SK-N-SH (cell line): ENCODE measurements at regions of chr4 and their contacts with region 1.

Region 1: GRCh38 chr4:140903522-140904475 is 147.6 kb upstream of the TBC1D9 start:
- DNase-seq: peak; percentile 44
- H3K4me3 ChIP-seq: no peak overlapping the region
- H3K27ac ChIP-seq: peak overlapping the region in 1 of 2 experiments; percentile 99; a peak in 3 of 4 replicates
- H3K4me1 ChIP-seq: peaks cover 20 to 69% of the 10 kb centered on the region in 2 experiments; a peak in 3 of 4 replicates
- H3K27me3 ChIP-seq: no peaks in the 10 kb centered on the region
- CTCF ChIP-seq: no peak
- EP300 ChIP-seq: peak in 1 of 2 experiments; percentile 84; a peak in 3 of 4 replicates
- RAD21 ChIP-seq: peak; percentile 51

Region 2: DNA sequence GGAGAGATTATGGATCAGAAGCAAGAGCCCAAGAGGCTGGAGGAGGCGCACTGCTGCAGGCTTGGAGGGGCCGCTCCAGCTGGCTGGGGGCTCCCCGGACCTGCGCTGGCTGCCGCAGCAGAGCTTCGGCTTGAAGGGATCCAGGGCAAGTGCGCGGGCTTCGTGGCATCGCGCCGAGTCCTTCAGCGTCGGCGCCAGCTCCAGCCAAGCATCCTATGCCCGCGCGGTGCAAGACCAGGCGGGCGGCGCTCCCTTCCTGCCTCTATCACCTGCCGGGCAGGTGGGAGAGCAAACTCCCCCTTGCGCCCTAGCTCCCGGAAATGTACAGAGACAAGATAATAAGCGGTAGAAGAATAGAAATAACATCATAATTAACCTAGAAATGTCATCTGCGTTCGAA is 324.5 kb before region 1 on chr4:
- CTCF ChIA-PET with region 1: no interaction called
- POLR2A ChIA-PET with region 1: no interaction called
- DNase-seq: peak; percentile 70
- H3K4me3 ChIP-seq: peak overlapping the region in 1 of 2 experiments; percentile 19; a peak in 1 of 4 replicates
- H3K27ac ChIP-seq: no peak overlapping the region
- H3K4me1 ChIP-seq: peaks cover 0 to 4% of the 10 kb centered on the region in 2 experiments; a peak in 1 of 4 replicates
- H3K27me3 ChIP-seq: peaks cover 34% of the 10 kb centered on the region; the same call in 1 of the 2 replicates
- CTCF ChIP-seq: no peak
- EP300 ChIP-seq: no peak
- RAD21 ChIP-seq: no peak

Region 3: DNA sequence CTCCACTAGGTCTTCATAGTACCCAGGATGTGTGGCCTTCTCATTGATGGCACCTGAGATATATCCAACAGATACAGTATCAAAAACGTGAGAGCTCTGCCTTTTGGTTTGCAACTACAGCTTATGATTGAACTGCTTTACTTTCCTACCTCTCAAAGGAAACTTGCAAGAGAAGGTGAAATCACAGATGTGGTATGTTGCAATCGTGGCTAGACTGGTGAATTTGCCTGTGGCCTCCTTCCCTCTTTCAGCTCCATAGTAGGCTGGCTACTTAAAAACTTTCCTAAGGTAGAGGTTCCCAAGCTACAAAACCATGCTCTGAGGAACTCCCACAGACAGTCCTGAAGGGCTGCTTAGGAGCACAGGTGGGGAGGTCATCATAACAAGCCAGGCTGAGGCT is 241.7 kb before region 1 on chr4:
- CTCF ChIA-PET with region 1: no interaction called
- POLR2A ChIA-PET with region 1: no interaction called
- DNase-seq: no peak
- H3K4me3 ChIP-seq: no peak overlapping the region
- H3K27ac ChIP-seq: no peak overlapping the region
- H3K4me1 ChIP-seq: no peaks in the 10 kb centered on the region
- H3K27me3 ChIP-seq: no peaks in the 10 kb centered on the region
- CTCF ChIP-seq: no peak
- EP300 ChIP-seq: no peak
- RAD21 ChIP-seq: no peak

Region 4: GRCh38 chr4:140807491-140808252 is 96.1 kb before region 1 on chr4:
- CTCF ChIA-PET with region 1: no interaction called
- POLR2A ChIA-PET with region 1: no interaction called
- DNase-seq: no peak
- H3K4me3 ChIP-seq: no peak overlapping the region
- H3K27ac ChIP-seq: no peak overlapping the region
- H3K4me1 ChIP-seq: no peaks in the 10 kb centered on the region
- H3K27me3 ChIP-seq: no peaks in the 10 kb centered on the region; the same call in 1 of the 2 replicates
- CTCF ChIP-seq: no peak
- EP300 ChIP-seq: no peak
- RAD21 ChIP-seq: no peak

Region 5: DNA sequence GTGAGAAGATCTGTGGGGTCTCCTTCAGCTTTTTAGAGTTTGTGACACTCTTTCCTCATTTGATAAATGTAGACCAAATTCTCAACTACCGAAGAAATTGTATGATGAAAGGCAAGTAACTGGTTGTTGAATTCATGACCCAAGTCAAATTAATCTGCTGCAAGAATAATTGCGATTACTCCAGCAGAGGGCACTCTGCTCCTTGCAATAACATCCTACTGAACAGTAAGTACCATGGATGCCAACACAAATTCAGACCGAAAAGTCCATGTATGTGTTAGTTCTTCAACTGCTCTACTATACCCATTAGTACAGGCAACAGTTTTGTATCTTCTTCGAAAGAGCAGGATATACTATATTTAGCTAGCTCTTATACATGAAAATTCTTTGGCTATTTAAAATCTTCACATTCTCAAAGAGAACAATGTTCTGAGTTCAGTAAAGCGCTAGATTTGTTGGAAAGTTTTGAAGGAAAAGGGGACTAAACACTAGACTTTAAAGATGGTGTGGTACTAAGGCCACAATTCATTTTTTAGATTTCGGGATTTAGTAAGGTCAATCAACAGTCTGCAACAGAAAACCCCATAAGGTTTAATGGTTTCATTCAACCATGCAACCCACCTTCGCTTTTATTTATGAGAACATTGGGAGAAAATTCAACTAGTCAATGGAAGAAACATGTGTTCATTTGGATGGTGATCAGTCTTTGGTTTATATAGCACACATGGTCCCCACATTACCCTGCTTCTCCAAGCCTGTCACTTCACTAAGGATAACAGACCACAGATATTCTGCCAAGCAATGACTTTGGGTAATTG is 42.2 kb before region 1 on chr4:
- CTCF ChIA-PET with region 1: interaction called, 10 read pairs
- POLR2A ChIA-PET with region 1: no interaction called
- DNase-seq: peak; percentile 47
- H3K4me3 ChIP-seq: no peak overlapping the region
- H3K27ac ChIP-seq: peak overlapping the region in 1 of 2 experiments; percentile 67; a peak in 2 of 4 replicates
- H3K4me1 ChIP-seq: peaks cover 0 to 30% of the 10 kb centered on the region in 2 experiments; a peak in 2 of 4 replicates
- H3K27me3 ChIP-seq: no peaks in the 10 kb centered on the region
- CTCF ChIP-seq: peak; percentile 86
- EP300 ChIP-seq: no peak
- RAD21 ChIP-seq: peak; percentile 99

Region 6: DNA sequence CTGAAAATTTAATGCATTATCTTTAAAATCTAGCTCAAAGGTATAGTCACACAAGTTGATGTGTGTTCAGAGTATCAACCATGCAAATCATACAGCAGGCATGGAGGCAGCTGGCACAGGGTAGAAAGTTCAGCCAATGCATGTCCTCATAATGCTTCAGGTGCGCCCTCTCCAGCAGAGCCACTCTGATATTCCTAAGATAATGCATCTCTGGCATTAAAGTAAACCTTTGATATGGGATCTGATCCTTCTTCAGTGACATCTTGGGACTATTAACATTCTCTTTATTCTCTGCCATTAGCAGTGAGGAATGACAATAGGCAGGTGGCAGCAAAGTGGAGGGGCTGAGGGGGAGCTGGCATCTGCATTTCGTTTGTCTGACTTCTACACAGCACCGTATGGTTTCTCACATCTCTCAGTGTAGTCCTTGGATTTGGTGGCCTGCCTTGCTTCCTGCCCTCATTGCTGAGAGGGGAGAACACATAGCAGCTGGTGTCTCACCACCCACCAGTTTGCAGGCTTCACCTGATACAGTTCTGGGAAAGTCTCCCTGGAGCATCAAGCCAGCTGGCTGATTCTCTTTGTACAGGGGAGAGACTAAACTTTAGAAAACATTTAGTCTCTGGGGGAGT is 21.1 kb after region 1 on chr4:
- CTCF ChIA-PET with region 1: interaction called, 5 read pairs
- POLR2A ChIA-PET with region 1: interaction called, 10 read pairs
- DNase-seq: peak; percentile 36
- H3K4me3 ChIP-seq: no peak overlapping the region
- H3K27ac ChIP-seq: peak overlapping the region in 1 of 2 experiments; percentile 91; a peak in 2 of 4 replicates
- H3K4me1 ChIP-seq: peaks cover 3 to 22% of the 10 kb centered on the region in 2 experiments; a peak in 3 of 4 replicates
- H3K27me3 ChIP-seq: no peaks in the 10 kb centered on the region
- CTCF ChIP-seq: no peak
- EP300 ChIP-seq: peak in 1 of 2 experiments; percentile 68; a peak in 1 of 4 replicates
- RAD21 ChIP-seq: peak; percentile 57

Region 7: GRCh38 chr4:140935254-140935653 is 31.5 kb after region 1 on chr4:
- CTCF ChIA-PET with region 1: interaction called, 11 read pairs
- POLR2A ChIA-PET with region 1: interaction called, 3 read pairs
- DNase-seq: peak; percentile 70
- H3K4me3 ChIP-seq: no peak overlapping the region
- H3K27ac ChIP-seq: peak overlapping the region; percentile 58 to 98
- H3K4me1 ChIP-seq: peaks cover 44 to 50% of the 10 kb centered on the region in 2 experiments
- H3K27me3 ChIP-seq: no peaks in the 10 kb centered on the region
- CTCF ChIP-seq: no peak
- EP300 ChIP-seq: peak; percentile 65 to 96; a peak in 3 of 4 replicates
- RAD21 ChIP-seq: peak; percentile 48

Region 8: GRCh38 chr4:141020801-141021261 is 117.0 kb after region 1 on chr4:
- CTCF ChIA-PET with region 1: interaction called, 7 read pairs
- POLR2A ChIA-PET with region 1: interaction called, 12 read pairs
- DNase-seq: no peak
- H3K4me3 ChIP-seq: peak overlapping the region in 1 of 2 experiments; percentile 9; a peak in 1 of 4 replicates
- H3K27ac ChIP-seq: peak overlapping the region; percentile 84 to 100
- H3K4me1 ChIP-seq: peaks cover 28 to 65% of the 10 kb centered on the region in 2 experiments
- H3K27me3 ChIP-seq: no peaks in the 10 kb centered on the region
- CTCF ChIP-seq: no peak
- EP300 ChIP-seq: peak; percentile 68 to 74
- RAD21 ChIP-seq: no peak

Region 9: DNA sequence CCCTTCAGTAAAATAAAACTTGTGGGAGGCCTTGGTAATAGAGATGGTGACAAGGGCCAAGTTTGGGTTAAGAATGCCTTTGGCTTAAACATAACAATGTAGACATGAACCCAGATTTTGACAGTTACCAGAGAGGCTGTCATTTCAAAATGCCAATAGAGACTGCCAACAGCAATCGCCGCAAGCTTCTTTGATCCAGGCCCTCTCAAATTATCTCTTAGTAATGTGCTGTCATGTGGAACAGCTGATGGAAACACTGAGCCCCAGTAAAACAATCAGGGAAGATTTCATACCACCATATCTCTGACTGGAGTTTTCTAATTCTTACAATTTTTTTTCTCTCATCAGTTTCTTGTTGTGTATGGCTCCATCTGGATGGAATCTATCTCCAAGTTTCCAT is 397.4 kb after region 1 on chr4:
- CTCF ChIA-PET with region 1: no interaction called
- POLR2A ChIA-PET with region 1: no interaction called
- DNase-seq: no peak
- H3K4me3 ChIP-seq: no peak overlapping the region
- H3K27ac ChIP-seq: no peak overlapping the region
- H3K4me1 ChIP-seq: no peaks in the 10 kb centered on the region
- H3K27me3 ChIP-seq: no peaks in the 10 kb centered on the region
- CTCF ChIP-seq: no peak
- EP300 ChIP-seq: no peak
- RAD21 ChIP-seq: no peak